ENCODE measurements at regions of chr5 and their contacts with region 1.

Region 1: DNA sequence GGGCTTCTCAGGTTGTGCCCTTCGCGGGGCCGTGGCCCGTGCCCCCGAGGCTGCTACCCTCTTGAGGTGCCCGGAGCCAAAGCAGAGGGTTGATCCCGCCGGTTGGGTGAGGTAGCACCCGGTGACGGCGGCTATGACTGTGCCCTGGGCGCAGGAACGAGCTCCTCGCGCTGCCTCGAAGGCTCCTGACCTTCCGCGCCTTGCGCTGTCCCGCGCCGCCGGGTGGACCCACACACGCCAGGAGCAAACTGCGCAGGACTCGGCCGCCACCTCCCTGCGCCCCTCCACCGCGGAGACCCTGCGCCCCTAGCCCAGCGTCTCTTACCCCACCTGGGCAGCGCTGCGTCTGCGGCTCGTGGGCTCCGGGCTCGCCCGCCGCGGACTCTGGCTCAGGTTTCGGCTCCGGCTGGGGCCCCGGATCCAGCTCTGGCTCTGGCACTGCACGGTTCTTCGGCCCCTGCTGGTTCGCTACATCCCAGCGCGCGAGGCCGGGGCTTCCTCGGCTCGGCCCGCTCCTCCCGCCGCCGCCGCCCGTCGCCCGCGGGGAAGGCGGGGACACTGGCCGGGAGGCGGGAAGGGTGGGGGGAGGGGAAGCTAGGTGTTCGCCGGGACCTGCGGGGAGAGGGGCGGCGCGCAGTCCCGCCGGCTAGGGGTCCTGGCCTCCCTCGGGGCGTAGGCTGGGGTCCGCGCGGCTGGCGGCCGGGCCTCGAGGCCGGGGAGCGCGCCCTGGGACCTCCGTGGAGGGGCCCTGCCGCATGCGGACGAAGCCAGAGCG is 5.4 kb upstream of the PITX1 start:
- DNase-seq: peak; percentile 37
- H3K4me3 ChIP-seq: no peak overlapping the region
- H3K27ac ChIP-seq: no peak overlapping the region
- H3K4me1 ChIP-seq: peaks cover 9% of the 10 kb centered on the region
- H3K27me3 ChIP-seq: peaks cover 40% of the 10 kb centered on the region
- CTCF ChIP-seq: no peak

Region 2: DNA sequence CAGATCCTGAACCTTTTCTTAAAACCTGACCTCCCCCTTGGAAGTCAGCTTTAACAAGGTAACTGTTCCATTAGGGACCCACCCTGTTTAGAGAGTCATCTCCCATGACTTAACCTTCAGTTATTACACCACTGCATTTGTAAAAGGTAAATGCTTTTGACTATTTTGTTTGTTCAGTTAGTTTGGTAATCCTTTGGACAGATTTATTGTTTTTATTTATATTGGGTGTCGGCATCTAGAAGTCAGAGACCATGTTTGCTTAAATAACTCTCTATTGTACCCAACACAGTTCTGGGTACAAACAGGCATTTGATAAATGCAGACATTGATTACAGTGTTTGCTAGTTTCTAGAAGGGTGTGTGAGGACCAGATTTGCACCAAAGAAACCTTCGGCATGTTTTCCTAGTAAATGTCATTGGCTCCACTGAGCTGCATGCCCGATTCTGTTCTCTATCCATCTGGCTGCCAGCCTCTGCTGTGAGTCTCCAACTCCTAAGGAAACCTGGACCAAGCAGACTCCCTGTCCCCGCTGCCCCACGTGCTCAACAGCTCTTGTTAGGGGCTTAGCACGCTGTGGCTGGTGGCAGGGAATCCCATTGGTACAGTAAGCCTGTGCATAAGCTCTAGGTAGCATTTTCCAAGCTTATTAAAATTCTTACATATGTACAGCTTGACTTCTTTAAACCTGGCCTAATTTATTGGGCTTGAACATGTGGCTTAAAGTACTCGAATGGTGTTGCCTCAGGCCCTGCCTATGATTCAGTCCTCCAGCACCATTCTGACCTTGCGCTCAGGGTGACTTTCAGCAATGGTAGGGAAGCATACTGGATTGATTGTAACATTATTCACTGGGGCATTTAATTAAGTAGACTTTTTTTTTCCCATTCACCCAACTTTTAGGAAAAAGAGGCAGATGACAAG is 127.9 kb before region 1 on chr5:
- CTCF ChIA-PET with region 1: no interaction called
- dilution Hi-C with region 1: no loop called
- in situ Hi-C with region 1: no loop called
- intact Hi-C with region 1: no loop called
- DNase-seq: no peak
- H3K4me3 ChIP-seq: no peak overlapping the region
- H3K27ac ChIP-seq: no peak overlapping the region
- H3K4me1 ChIP-seq: peaks cover 2% of the 10 kb centered on the region
- H3K27me3 ChIP-seq: no peaks in the 10 kb centered on the region
- CTCF ChIP-seq: no peak

Region 3: GRCh38 chr5:134994560-134995156 is 44.8 kb before region 1 on chr5:
- CTCF ChIA-PET with region 1: no interaction called
- dilution Hi-C with region 1: no loop called
- in situ Hi-C with region 1: no loop called
- intact Hi-C with region 1: no loop called
- DNase-seq: no peak
- H3K4me3 ChIP-seq: no peak overlapping the region
- H3K27ac ChIP-seq: no peak overlapping the region
- H3K4me1 ChIP-seq: no peaks in the 10 kb centered on the region
- H3K27me3 ChIP-seq: no peaks in the 10 kb centered on the region
- CTCF ChIP-seq: no peak

Region 4: DNA sequence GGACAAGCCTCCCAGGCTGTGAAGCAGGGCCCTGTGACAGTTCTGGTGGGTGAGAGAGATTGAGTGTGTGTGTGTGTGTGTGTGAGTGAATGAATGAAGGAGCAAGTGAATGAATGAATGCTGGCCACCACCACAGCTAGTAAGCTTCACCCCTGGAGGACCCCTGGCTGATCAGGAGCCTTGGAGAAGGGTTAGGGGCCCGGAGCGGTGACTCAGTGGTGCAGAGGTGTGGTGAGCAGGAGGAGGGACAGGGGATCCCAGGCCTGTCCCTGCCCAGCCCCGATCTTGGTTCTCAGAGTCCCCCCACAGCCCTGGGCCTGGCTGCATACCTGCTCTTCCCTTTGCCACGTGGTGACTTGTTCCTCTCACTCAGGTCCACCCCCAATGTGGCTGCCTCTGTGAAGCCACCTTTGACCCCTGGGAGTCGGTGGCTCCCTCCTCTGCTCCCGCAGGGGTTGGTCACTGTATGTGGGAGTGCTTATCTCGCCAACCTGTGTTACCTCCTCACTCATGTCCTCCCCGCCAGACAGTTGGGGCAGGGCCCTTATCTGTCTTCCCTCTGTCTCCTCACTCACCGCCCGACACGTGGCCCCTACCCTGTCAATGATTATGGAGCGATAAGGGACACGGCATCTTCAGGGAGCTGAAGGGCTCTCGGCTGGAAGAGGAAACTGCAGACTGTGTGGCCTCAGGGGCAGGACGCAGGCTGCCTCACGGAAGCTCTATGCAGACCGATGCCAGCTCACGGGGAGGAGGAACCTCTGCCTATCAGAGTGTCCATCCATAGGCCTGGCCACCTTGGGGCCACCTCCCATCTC is 94.4 kb after region 1 on chr5:
- CTCF ChIA-PET with region 1: no interaction called
- dilution Hi-C with region 1: loop called (anchors 5 kb)
- in situ Hi-C with region 1: no loop called
- intact Hi-C with region 1: no loop called
- DNase-seq: no peak
- H3K4me3 ChIP-seq: no peak overlapping the region
- H3K27ac ChIP-seq: no peak overlapping the region
- H3K4me1 ChIP-seq: peaks cover 26% of the 10 kb centered on the region
- H3K27me3 ChIP-seq: no peaks in the 10 kb centered on the region
- CTCF ChIP-seq: no peak

Region 5: DNA sequence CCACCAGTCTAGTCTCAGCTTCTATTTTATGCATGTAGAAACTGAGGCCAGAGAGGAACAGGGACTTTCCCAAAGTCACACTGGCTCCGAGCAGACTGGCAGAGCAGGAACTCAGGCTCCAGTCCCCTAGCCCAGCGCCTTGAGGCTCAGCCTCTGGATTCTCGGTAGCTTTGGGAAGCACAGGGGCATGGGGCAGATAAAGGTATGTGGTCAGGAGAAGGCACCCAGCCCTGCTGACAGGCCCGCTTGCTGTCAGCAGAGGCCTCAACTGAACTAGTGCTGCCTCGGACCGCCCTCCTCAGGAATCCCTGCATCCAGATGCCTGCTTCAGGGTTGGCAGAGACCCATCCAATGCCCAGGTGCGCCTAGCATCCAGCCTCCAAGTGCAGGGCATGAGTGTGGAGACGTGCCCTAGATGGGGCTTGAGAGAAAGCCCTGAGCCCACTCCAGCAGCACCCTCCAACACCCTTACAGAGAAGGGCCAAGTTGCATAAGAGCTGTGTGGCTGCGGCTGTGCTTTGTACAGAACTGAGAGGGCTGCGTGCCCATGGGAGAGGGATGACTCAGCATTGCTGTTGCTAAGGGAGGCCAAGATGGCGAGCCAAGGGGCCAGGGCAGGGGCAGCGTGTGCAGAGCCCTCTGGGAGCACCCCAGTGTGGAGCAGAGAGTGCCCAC is 190.9 kb after region 1 on chr5:
- CTCF ChIA-PET with region 1: no interaction called
- dilution Hi-C with region 1: no loop called
- in situ Hi-C with region 1: no loop called
- intact Hi-C with region 1: no loop called
- DNase-seq: no peak
- H3K4me3 ChIP-seq: no peak overlapping the region
- H3K27ac ChIP-seq: no peak overlapping the region
- H3K4me1 ChIP-seq: peaks cover 3% of the 10 kb centered on the region
- H3K27me3 ChIP-seq: no peaks in the 10 kb centered on the region
- CTCF ChIP-seq: no peak

Measured in mammary epithelial cell (primary cell).